Naive thymus-derived CD4-positive, alpha-beta T cell (primary cell): ENCODE measurements at regions of chr1 and their contacts with region 1.

Region 1: GRCh38 chr1:27609210-27609555 is 5.2 kb upstream of the AHDC1 start:
- DNase-seq: no peak
- ATAC-seq: peak; percentile 22
- H3K4me3 ChIP-seq: no peak overlapping the region
- H3K4me3 Mint-ChIP-seq: no peak overlapping the region
- H3K27ac ChIP-seq: peak overlapping the region; percentile 35
- H3K27ac Mint-ChIP-seq: no peak overlapping the region
- H3K4me1 ChIP-seq: peaks cover 34 to 50% of the 10 kb centered on the region in 2 donors
- H3K4me1 Mint-ChIP-seq: peaks cover 12 to 43% (median 37%) of the 10 kb centered on the region in 7 donors
- H3K27me3 ChIP-seq: no peaks in the 10 kb centered on the region
- H3K27me3 Mint-ChIP-seq: no peaks in the 10 kb centered on the region

Region 2: DNA sequence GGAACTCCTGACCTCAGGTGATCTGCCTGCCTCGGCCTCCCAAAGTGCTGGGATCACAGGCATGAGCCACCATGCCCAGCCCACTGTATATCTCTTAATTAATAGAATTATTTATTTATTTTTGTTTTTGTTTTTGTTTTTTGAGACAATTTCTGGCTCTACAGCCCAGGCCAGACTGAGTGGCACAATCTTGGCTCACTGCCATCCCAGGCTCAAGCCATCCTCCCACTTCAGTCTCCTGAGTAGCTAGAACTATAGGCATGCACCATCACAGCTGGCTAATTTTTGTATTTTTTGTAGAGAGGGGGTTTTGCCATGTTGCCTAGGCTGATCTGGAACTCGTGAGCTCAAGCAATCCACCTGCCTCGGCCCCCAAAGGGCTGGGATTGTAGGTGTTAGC is 390.4 kb before region 1 on chr1:
- CTCF ChIA-PET with region 1: no interaction called
- POLR2A ChIA-PET with region 1: no interaction called
- intact Hi-C with region 1: no loop called
- DNase-seq: no peak
- ATAC-seq: no peak
- H3K4me3 ChIP-seq: no peak overlapping the region
- H3K4me3 Mint-ChIP-seq: no peak overlapping the region
- H3K27ac ChIP-seq: no peak overlapping the region
- H3K27ac Mint-ChIP-seq: no peak overlapping the region
- H3K4me1 ChIP-seq: no peaks in the 10 kb centered on the region
- H3K4me1 Mint-ChIP-seq: peaks cover 0 to 12% (median 10%) of the 10 kb centered on the region in 7 donors
- H3K27me3 ChIP-seq: no peaks in the 10 kb centered on the region
- H3K27me3 Mint-ChIP-seq: peaks cover 0 to 8% (median 0%) of the 10 kb centered on the region in 5 donors

Region 3: GRCh38 chr1:27402349-27402754 is 206.8 kb before region 1 on chr1:
- CTCF ChIA-PET with region 1: interaction called, 23 read pairs
- POLR2A ChIA-PET with region 1: interaction called, 6 read pairs
- intact Hi-C with region 1: loop called (anchors 1 kb)
- DNase-seq: no peak
- ATAC-seq: peak; percentile 44
- H3K4me3 ChIP-seq: no peak overlapping the region
- H3K4me3 Mint-ChIP-seq: no peak overlapping the region
- H3K27ac ChIP-seq: peak overlapping the region; percentile 48
- H3K27ac Mint-ChIP-seq: peak overlapping the region in 7 of 9 donors; percentile 36 to 95 (median 87)
- H3K4me1 ChIP-seq: peaks cover 0 to 17% of the 10 kb centered on the region in 2 donors
- H3K4me1 Mint-ChIP-seq: peaks cover 10 to 40% (median 33%) of the 10 kb centered on the region in 7 donors
- H3K27me3 ChIP-seq: no peaks in the 10 kb centered on the region
- H3K27me3 Mint-ChIP-seq: no peaks in the 10 kb centered on the region

Region 4: DNA sequence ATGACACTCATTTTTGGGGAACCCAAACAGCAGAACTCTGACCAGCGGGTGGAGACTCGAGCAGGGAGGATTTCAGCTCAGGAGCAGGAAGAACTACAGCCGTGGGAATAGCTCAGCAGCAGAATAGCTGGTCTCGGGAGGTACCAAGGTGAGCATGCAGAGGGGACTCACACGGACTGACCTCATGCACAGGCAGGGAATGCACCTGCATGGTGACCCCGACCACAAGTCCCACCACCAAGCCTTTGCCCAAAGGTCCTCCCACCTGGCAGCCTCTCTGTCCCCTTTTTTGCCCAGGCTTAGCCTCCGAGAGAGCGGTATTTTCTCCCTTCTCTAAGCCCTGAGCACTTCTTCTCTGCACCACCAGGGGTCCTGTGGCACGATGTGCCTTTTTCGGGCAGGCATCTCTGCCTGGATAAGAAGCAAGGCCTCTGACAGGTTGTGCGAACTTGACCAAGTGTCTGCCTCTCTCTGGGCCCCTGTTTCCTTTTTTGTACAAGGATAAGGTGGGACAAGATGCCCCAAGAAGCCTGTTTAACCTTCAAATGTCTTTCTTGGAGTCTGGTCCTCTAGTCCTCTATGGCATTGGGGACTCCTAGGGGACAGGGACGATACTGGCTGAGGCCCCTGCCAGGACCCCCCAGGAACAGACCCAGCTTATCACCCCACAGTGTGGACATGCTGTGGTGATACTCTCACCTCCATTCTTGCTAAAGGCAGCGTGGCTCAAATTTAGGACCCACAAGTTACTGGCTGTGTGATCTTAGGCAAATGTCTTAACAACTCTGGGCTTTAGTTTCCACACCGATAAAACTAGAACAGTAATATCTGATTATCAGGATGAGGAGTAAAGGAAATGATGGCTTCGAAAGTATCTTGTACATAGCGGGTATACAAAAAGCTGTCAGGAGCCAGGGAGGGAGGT is 34.8 kb after region 1 on chr1:
- CTCF ChIA-PET with region 1: interaction called, 15 read pairs
- POLR2A ChIA-PET with region 1: interaction called, 8 read pairs
- intact Hi-C with region 1: loop called in 1 of 2 experiments (anchors 1 kb)
- DNase-seq: peak in 8 of 9 donors; percentile 54 to 79 (median 67)
- ATAC-seq: peak; percentile 98
- H3K4me3 ChIP-seq: no peak overlapping the region
- H3K4me3 Mint-ChIP-seq: peak overlapping the region in 4 of 10 donors; percentile 7 to 34 (median 28)
- H3K27ac ChIP-seq: no peak overlapping the region
- H3K27ac Mint-ChIP-seq: peak overlapping the region; percentile 38 to 85 (median 64)
- H3K4me1 ChIP-seq: peaks cover 11 to 12% of the 10 kb centered on the region in 2 donors
- H3K4me1 Mint-ChIP-seq: peaks cover 4 to 38% (median 23%) of the 10 kb centered on the region in 7 donors
- H3K27me3 ChIP-seq: no peaks in the 10 kb centered on the region
- H3K27me3 Mint-ChIP-seq: no peaks in the 10 kb centered on the region